AG04449 (cell line): ENCODE measurements at regions of chr3 and their contacts with region 1.

Region 1: DNA sequence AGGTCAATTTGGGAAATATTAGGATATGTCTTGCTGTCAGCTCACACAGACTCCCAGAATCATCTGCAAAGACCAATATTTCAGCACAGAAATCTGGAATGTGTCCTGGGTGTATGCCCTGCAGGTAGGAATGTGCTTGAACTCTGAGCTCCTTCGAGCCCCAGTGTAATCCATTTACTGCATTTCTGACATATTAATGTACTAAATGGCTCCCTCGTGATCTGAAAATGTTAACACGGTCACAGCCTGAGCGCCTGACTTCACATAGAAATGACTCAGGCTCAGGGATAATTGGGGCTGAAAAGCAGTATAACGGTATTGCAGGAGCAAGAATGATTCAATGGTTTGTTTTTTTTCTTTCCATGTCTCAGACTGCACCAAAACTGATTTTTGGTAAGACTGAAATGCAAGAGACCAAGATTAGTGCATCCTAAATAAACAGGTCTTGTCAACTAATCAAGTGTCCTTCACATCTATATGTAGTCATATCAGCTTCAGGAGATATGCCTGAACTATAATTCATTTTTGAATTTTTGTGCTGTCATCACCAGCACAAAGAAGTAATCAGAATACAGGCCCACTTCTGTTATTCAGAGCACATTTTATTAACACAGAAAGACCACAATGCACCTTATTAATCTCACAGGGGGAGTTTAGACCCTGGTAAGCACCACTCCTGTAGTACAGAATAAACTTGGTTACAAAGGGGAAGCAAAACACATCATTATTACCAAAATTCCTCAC is 49.8 kb downstream of the DCLK3 start:
- DNase-seq: peak; percentile 46
- H3K4me3 ChIP-seq: no peak overlapping the region
- CTCF ChIP-seq: peak; percentile 40

Region 2: DNA sequence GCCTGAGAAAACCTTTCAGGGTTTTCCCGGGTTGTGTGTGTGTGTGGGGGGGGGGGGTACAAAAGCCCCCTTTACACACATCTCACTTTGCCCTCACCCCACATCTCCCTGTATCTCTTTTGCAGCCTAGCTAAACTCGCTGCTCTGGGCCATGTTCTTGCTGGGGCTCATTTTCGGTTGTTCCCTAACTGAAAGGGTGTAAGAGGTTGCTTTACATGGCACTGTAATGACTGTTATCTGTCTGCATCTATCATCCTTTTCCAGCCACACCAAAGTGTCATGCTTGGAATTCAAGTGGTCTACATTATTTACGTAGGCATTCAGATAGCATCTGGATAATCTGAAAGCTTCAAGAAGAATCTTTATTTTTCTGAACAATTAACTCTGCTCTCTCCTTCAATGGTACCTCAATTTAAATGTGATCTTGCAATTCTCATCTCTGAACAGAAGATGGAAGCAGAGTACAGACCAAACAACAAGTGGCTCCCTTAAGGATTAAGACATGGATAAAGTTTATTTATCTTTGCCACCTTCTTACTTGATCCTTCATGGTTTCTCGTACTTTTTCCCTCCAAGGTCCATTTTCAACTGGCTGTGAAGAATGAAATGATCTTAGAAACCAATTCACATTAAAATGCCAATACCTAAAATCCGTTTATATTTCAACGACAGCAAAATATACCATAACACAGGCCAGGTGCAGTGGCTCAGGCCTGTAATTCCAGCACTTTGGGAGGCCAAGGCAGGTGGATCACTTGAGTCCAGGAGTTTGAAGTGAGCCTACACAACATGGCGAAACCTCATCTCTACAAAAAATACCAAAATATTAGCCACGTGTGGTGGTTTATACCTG is 14.9 kb after region 1 on chr3:
- CTCF ChIA-PET with region 1: interaction called, 11 read pairs
- POLR2A ChIA-PET with region 1: no interaction called
- DNase-seq: peak; percentile 28
- H3K4me3 ChIP-seq: no peak overlapping the region
- CTCF ChIP-seq: peak; percentile 48